AG04449 (cell line): ENCODE measurements at regions of chr3 and their contacts with region 1.

Region 1: GRCh38 chr3:186540221-186540834 is 3.9 kb downstream of the CRYGS start:
- DNase-seq: peak; percentile 21
- H3K4me3 ChIP-seq: no peak overlapping the region
- CTCF ChIP-seq: peak; percentile 32

Region 2: DNA sequence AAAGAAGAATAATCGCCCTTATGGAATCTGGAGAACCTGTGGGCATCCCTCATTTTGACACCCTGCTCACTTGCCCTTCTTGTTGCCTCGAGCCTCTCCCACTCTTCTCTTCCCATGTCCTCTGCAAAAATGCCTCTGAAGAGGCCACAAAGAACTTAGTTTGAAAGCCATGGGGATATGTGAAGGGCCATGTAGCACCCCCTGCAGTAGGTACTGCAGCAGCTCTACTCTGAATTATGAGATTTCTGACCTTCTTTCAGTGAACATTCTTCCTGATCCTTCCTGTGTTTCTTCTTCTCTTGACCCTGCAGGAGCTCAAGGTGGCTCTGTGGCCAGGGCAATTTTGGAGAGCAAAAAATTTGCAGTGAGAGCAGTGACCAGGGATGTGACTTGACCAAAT is 572.2 kb before region 1 on chr3:
- CTCF ChIA-PET with region 1: interaction called, 10 read pairs
- POLR2A ChIA-PET with region 1: no interaction called
- DNase-seq: no peak
- H3K4me3 ChIP-seq: no peak overlapping the region
- CTCF ChIP-seq: no peak

Region 3: DNA sequence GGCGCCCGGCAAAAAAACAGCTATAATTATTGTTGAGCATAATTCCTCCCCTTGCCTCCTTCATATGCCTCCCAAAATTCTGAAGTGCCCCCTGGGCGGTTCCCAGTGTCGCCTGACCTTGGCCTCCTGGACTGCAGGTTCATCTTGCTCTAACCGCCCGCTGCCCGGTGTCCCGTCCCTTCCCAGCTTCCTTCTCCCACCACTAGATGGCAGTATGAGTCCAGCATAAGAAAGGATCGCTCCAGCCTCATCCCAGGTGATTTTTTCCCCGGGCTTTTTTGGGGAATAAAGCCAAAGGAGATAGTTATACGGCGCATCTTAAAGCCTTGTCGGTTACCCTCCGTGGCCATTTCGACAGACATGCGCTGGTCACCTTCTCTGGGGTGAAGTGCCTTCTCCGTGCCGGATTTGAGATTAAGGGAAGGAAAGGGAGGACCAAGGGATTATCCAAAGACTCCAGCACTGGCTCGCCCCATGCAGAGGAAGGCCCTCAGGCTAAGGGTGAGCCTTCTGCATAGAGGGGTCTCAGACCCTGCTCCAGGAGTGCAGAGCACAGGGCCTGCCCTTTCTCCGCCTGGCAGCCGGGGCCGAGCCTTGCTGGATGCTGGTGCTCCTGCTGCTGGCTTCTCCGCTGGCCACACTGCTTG is 556.7 kb before region 1 on chr3:
- CTCF ChIA-PET with region 1: interaction called, 211 read pairs
- POLR2A ChIA-PET with region 1: no interaction called
- DNase-seq: no peak
- H3K4me3 ChIP-seq: no peak overlapping the region; the same call in 1 of the 2 replicates
- CTCF ChIP-seq: peak; percentile 79

Region 4: GRCh38 chr3:186080849-186081438 is 459.4 kb before region 1 on chr3:
- CTCF ChIA-PET with region 1: interaction called, 10 read pairs
- POLR2A ChIA-PET with region 1: no interaction called
- DNase-seq: no peak
- H3K4me3 ChIP-seq: no peak overlapping the region
- CTCF ChIP-seq: no peak

Region 5: DNA sequence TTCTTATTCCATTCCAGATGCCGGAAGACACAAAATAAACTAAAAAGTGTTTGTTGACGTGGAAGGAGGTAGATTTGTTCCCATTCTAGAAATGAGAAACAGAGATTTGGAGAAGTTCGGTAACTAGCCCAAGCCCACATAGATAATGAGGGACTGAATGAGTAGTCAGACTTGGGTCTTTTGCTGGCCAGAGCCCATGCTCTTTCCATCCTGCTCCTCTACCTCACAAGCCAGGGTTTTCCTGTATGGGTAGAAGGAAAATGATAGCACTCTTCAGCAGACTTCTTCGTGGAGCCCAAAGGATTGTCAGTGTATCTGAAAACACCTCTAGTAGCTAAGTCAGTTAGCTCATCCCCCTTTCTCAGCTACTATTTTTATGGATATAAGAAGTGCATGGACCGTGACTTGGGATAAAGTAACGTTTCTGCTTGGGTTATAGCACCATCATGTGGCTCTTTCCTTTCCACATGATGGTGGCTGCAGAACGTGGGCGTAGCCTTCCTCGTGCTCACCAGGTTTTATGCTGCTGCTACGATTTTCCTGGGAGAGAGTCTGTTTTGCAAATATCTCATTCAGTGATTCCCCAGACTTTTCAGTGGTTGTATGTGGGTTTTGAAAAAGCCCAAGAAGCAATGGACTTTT is 262.9 kb before region 1 on chr3:
- CTCF ChIA-PET with region 1: interaction called, 53 read pairs
- POLR2A ChIA-PET with region 1: no interaction called
- DNase-seq: no peak
- H3K4me3 ChIP-seq: no peak overlapping the region
- CTCF ChIP-seq: peak; percentile 58

Region 6: GRCh38 chr3:186529201-186529999 is 10.9 kb before region 1 on chr3:
- CTCF ChIA-PET with region 1: interaction called, 30 read pairs
- POLR2A ChIA-PET with region 1: no interaction called
- DNase-seq: no peak
- H3K4me3 ChIP-seq: no peak overlapping the region
- CTCF ChIP-seq: no peak

Region 7: DNA sequence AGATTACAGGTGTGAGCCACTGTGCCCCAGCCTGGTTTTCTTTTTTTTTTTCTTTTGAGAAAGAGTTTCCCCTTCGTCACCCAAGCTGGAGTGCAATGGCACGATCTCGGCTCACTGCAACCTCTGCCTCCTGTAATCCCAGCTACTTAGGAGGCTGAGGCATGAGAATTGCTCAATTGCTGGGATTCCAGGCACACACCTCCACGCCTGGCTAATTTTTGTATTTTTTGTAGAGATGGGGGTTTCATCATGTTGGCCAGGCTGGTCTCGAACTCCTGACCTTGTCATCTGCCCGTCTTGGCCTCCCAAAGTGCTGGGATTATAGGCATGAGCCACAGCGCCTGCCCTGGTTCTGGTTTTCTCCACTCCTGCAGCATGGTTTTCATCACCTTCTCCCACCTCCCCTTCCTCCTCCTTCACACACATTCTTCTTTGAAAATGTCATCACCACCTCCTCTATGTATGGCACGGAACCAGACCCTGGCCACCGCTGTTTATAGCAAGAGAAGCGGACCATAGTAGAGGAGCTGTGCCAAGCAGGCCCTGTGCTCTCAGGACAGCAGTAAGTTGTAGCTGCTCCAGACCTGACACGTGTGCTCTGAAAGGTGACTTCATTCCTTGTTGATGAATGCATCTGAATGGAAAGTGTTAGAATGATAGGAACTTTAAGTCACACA is 57.9 kb after region 1 on chr3:
- CTCF ChIA-PET with region 1: no interaction called
- POLR2A ChIA-PET with region 1: no interaction called
- DNase-seq: no peak
- H3K4me3 ChIP-seq: no peak overlapping the region
- CTCF ChIP-seq: no peak

Region 8: GRCh38 chr3:186640473-186640818 is 100.1 kb after region 1 on chr3:
- CTCF ChIA-PET with region 1: no interaction called
- POLR2A ChIA-PET with region 1: no interaction called
- DNase-seq: no peak
- H3K4me3 ChIP-seq: no peak overlapping the region
- CTCF ChIP-seq: no peak

Region 9: GRCh38 chr3:186798239-186798874 is 258.0 kb after region 1 on chr3:
- CTCF ChIA-PET with region 1: no interaction called
- POLR2A ChIA-PET with region 1: no interaction called
- DNase-seq: no peak
- H3K4me3 ChIP-seq: no peak overlapping the region
- CTCF ChIP-seq: no peak

Region 10: DNA sequence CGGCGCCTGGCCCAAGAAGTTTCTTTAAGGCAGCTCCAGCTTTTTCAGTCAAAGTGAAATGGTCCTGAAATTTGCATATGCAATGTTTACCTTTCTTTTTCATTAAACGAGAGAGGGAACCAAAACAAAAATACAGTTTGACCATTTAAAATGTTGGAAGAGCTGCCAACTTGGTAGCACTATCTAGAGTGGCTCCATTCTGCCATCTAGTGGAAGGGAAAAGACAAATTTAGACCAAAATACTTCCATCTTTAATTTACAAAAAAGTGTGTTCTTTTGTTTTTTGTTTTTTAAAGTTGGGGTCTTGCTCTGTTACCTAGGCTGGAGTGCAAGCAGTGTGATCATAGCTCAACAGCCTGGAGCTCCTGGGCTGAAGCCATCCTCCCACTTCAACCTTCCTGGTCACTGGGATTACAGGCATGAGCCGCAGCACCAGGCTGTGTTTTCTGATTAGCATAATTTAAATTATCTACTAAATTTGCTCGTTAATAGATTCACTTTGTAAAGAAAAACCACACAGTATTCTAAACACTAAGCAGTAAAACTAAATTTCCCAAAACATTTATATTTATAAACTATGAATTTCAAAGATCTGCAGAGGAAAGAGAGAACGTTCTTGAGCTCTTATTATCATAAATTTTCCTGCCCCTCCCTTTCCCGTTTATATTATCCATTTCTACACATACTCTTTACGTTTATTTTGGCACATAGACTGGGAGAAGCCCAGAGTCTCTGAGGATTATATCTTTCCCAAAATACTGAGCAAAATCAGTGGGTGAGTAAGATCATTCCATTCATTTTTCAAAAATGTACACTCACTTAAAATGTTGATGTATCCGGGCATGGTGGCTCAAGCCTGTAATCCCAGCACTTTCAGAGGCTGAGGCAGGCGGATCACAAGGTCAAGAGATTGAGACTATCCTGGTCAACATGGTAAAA is 281.4 kb after region 1 on chr3:
- CTCF ChIA-PET with region 1: interaction called, 12 read pairs
- POLR2A ChIA-PET with region 1: no interaction called
- DNase-seq: peak; percentile 72
- H3K4me3 ChIP-seq: peak overlapping the region; percentile 48
- CTCF ChIP-seq: peak; percentile 35